ENCODE measurements at regions of chr12 and their contacts with region 1.

Region 1: DNA sequence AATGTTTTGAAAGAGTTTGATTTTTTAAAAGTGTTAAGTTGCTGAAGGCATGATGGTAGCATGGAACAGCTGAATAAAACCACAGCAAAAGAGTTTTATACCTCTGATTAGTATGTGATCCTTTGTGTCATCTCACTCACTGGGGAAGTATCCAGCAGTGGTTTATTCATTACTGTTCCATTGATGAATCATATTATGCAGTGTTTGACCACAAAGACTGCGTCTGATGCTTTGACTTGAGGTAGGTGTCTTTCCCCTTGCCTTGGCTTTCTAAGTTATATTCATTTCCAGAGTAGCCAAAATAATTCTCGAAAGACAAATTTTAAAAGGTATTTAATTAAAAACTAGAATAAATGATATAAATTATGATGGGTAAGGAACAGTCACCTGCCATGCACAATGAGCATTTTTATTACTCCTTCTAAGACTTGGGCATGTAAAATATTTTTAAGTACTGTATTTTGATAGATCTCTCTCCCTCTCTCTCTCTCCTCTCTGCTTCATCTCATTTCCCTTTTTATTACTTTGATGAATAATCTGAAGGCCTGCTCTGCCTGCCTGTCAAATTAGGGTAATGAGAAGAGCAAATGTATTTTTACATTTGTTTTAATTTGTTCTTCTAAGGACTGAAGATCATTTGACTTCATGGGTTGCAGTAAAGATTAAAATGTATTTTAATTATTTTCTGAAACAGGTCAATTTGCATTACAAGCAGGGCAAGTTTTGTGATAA is 164.9 kb downstream of the NAV3 start:
- DNase-seq: peak; percentile 90
- ATAC-seq: peak; percentile 78
- H3K4me3 ChIP-seq: no peak overlapping the region
- H3K27ac ChIP-seq: no peak overlapping the region
- H3K4me1 ChIP-seq: no peaks in the 10 kb centered on the region; the same call in 1 of the 2 replicates
- H3K27me3 ChIP-seq: no peaks in the 10 kb centered on the region
- CTCF ChIP-seq: no peak
- POLR2A ChIP-seq: no peak
- RAD21 ChIP-seq: no peak

Region 2: GRCh38 chr12:78120866-78121560 is 125.4 kb after region 1 on chr12:
- CTCF ChIA-PET with region 1: no interaction called
- POLR2A ChIA-PET with region 1: no interaction called
- dilution Hi-C with region 1: no loop called
- in situ Hi-C with region 1: loop called (anchors 10 kb)
- intact Hi-C with region 1: loop called (anchors 1 kb)
- DNase-seq: peak; percentile 52
- ATAC-seq: no peak
- H3K4me3 ChIP-seq: no peak overlapping the region
- H3K27ac ChIP-seq: no peak overlapping the region
- H3K4me1 ChIP-seq: no peaks in the 10 kb centered on the region; the same call in 1 of the 2 replicates
- H3K27me3 ChIP-seq: no peaks in the 10 kb centered on the region
- CTCF ChIP-seq: peak; percentile 46
- POLR2A ChIP-seq: no peak
- RAD21 ChIP-seq: peak; percentile 51